ENCODE measurements at regions of chr15 and their contacts with region 1.

Region 1: GRCh38 chr15:33104212-33104611 is 90.3 kb downstream of the FMN1 start:
- DNase-seq: peak; percentile 56
- ATAC-seq: peak; percentile 98
- H3K4me3 Mint-ChIP-seq: no peak overlapping the region
- H3K27ac Mint-ChIP-seq: peak overlapping the region; percentile 49
- H3K4me1 Mint-ChIP-seq: peaks cover 20% of the 10 kb centered on the region
- H3K27me3 Mint-ChIP-seq: no peaks in the 10 kb centered on the region

Region 2: DNA sequence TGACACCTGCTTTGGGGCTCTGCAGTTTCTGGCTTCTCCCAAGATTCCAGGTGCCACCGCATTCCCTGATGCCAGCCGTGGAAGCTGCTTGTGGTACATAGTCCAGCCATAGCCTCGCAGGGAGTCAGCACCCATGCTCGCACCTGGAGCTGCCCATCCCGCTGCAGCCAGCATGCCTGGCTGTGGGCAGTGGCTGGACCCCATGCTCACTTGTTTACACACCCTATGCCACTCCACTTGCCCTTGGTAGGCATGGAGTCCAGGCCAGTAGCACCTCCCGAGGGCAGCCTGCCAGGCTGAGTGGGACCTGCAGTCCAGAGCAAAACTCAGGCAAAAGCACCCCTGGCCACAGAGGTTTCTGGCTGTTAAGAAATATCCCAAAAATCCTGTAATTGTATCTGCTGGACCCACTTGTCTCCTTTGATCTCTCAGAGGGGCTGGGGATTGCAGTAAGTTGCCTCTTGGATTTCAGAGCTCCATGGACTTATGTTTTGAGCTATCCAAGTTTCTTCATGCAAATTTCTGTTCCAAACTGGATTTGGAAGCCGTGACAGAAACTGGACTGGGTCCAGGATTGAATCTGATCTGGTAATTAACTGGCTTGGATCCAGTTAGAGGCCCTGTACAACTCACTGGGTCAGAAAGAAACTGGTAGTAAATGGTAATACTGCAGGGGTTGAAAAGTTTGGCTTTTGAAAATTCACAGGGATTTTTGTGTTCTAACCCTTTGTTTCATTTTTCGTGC is 59.0 kb before region 1 on chr15:
- CTCF ChIA-PET with region 1: no interaction called
- POLR2A ChIA-PET with region 1: no interaction called
- intact Hi-C with region 1: loop called in 1 of 2 experiments (anchors 5 kb)
- DNase-seq: no peak
- ATAC-seq: no peak
- H3K4me3 Mint-ChIP-seq: no peak overlapping the region
- H3K27ac Mint-ChIP-seq: no peak overlapping the region
- H3K4me1 Mint-ChIP-seq: peaks cover 8% of the 10 kb centered on the region
- H3K27me3 Mint-ChIP-seq: no peaks in the 10 kb centered on the region

Region 3: DNA sequence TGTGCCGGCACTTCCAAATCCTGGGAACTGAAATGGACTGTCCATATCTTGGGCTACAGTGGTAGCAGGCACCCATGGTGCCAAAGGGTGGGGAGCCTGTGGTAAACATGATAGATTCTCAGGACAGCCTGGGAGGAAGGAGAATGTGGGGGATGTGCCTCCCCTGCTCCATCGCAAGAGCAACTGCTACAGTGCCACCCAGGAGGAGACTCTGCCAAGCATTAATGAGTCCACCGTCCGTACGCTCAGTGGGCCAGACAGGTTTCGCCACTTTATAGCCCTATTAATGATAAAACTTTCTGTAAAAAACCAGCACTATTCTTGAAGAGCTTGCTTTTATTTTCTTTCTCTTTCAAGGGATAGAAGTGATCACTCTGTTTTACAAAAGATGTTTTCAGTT is 15.1 kb after region 1 on chr15:
- CTCF ChIA-PET with region 1: interaction called, 3 read pairs
- POLR2A ChIA-PET with region 1: no interaction called
- intact Hi-C with region 1: loop called in 1 of 2 experiments (anchors 2 kb)
- DNase-seq: no peak
- ATAC-seq: no peak
- H3K4me3 Mint-ChIP-seq: no peak overlapping the region
- H3K27ac Mint-ChIP-seq: no peak overlapping the region
- H3K4me1 Mint-ChIP-seq: peaks cover under 1% of the 10 kb centered on the region
- H3K27me3 Mint-ChIP-seq: no peaks in the 10 kb centered on the region

Region 4: DNA sequence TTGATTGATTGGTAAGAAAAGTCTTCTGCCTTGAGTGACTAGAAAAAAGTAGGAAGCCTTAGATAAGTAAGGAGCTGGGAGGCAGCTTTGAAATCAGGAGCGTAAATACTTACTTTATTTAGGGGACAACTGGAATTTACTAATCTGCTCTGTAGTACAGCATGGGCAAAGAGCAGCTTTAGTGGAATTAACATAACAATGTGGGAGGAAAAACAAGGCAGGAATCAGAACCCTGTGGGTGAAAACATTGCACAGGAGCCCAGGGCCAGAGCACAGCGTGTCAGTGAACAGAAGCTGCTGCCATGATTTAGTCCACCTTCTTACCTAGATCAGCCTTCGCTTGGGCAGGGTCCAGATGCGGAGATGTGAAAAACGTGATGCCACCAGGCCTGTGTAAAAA is 75.7 kb after region 1 on chr15:
- CTCF ChIA-PET with region 1: no interaction called
- POLR2A ChIA-PET with region 1: no interaction called
- intact Hi-C with region 1: no loop called
- DNase-seq: no peak
- ATAC-seq: no peak
- H3K4me3 Mint-ChIP-seq: no peak overlapping the region
- H3K27ac Mint-ChIP-seq: no peak overlapping the region
- H3K4me1 Mint-ChIP-seq: no peaks in the 10 kb centered on the region
- H3K27me3 Mint-ChIP-seq: no peaks in the 10 kb centered on the region

Region 5: GRCh38 chr15:33215941-33216872 is 112.0 kb after region 1 on chr15:
- CTCF ChIA-PET with region 1: no interaction called
- POLR2A ChIA-PET with region 1: no interaction called
- intact Hi-C with region 1: no loop called
- DNase-seq: no peak
- ATAC-seq: peak; percentile 42
- H3K4me3 Mint-ChIP-seq: no peak overlapping the region
- H3K27ac Mint-ChIP-seq: no peak overlapping the region
- H3K4me1 Mint-ChIP-seq: no peaks in the 10 kb centered on the region
- H3K27me3 Mint-ChIP-seq: no peaks in the 10 kb centered on the region